Common myeloid progenitor, CD34-positive (primary cell): ENCODE measurements at regions of chr17 and their contacts with region 1.

Region 1: GRCh38 chr17:9644910-9645751 is at the start of gene USP43:
- DNase-seq: peak; percentile 30 to 80 (median 78)
- H3K4me3 ChIP-seq: peak within 1 kb of the TSS; percentile 64 to 86 (median 80)
- H3K27ac ChIP-seq: peak within 1 kb of the TSS in 1 of 2 experiments; percentile 3
- H3K4me1 ChIP-seq: peaks cover 3 to 23% (median 16%) of the 10 kb centered on the region in 4 experiments
- H3K27me3 ChIP-seq: peaks cover 0 to 7% (median 4%) of the 10 kb centered on the region in 5 experiments

Region 2: GRCh38 chr17:9676742-9677387 is 31.7 kb after region 1 on chr17:
- CTCF ChIA-PET with region 1: interaction called, 10 read pairs
- POLR2A ChIA-PET with region 1: no interaction called
- DNase-seq: no peak
- H3K4me3 ChIP-seq: no peak overlapping the region
- H3K27ac ChIP-seq: no peak overlapping the region
- H3K4me1 ChIP-seq: no peaks in the 10 kb centered on the region
- H3K27me3 ChIP-seq: no peaks in the 10 kb centered on the region

Region 3: GRCh38 chr17:9772658-9773057 is 127.5 kb after region 1 on chr17:
- CTCF ChIA-PET with region 1: no interaction called
- POLR2A ChIA-PET with region 1: no interaction called
- DNase-seq: no peak
- H3K4me3 ChIP-seq: no peak overlapping the region
- H3K27ac ChIP-seq: no peak overlapping the region
- H3K4me1 ChIP-seq: no peaks in the 10 kb centered on the region
- H3K27me3 ChIP-seq: peaks cover 0 to 7% (median 3%) of the 10 kb centered on the region in 5 experiments